IMR-90 (cell line): ENCODE measurements at regions of chr16 and their contacts with region 1.

Region 1: DNA sequence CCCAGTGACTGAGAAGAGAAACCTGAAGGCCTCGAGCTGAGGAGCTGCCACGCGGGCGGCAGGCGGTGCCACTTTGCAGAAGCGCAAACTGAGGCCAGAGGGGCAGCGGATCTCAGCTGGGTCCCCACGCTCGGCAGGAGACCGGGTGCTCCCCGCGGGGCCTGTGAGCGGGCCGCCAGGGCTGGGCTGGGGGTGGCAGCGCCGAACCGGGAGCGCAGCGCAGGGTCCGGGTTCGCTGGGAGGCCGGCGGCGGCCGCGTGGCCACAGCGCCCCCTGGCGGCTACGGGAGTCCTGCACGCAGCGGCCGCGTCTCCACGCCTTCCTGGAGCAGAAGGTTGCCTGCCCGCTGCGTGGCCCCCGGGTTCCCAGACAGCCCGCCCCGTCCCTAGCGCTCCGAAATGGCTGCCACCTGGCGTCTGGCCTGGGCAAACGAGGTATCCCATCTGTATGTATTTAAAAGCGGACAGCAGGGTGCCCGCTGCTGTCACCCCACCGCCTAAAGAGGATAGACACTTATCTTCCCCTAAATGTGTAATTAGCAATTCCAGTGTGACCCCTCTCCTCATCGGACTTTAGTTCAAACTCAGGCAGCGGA is 96.1 kb upstream of the CDH5 start:
- DNase-seq: peak; percentile 54
- ATAC-seq: peak; percentile 72
- H3K4me3 ChIP-seq: 0 out of 2 replicates have a peak overlapping the region, but pooled peaks have one; percentile 20
- H3K27ac ChIP-seq: peak overlapping the region; percentile 86
- H3K4me1 ChIP-seq: peaks cover 25% of the 10 kb centered on the region
- H3K27me3 ChIP-seq: no peaks in the 10 kb centered on the region
- CTCF ChIP-seq: peak; percentile 97
- POLR2A ChIP-seq: 0 out of 2 replicates have a peak, but pooled peaks have one; percentile 37
- RAD21 ChIP-seq: peak; percentile 97

Region 2: GRCh38 chr16:65336160-65336559 is 934.3 kb before region 1 on chr16:
- CTCF ChIA-PET with region 1: interaction called, 3 read pairs
- POLR2A ChIA-PET with region 1: no interaction called
- dilution Hi-C with region 1: no loop called
- in situ Hi-C with region 1: no loop called
- intact Hi-C with region 1: loop called (anchors 10 kb)
- DNase-seq: peak; percentile 77
- ATAC-seq: peak; percentile 90
- H3K4me3 ChIP-seq: no peak overlapping the region
- H3K27ac ChIP-seq: no peak overlapping the region; the same call in 1 of the 2 replicates
- H3K4me1 ChIP-seq: peaks cover 8% of the 10 kb centered on the region
- H3K27me3 ChIP-seq: no peaks in the 10 kb centered on the region
- CTCF ChIP-seq: no peak
- POLR2A ChIP-seq: no peak
- RAD21 ChIP-seq: no peak

Region 3: GRCh38 chr16:65658349-65658748 is 612.1 kb before region 1 on chr16:
- CTCF ChIA-PET with region 1: no interaction called
- POLR2A ChIA-PET with region 1: no interaction called
- dilution Hi-C with region 1: no loop called
- in situ Hi-C with region 1: no loop called
- intact Hi-C with region 1: loop called (anchors 5 kb)
- DNase-seq: peak; percentile 86
- ATAC-seq: peak; percentile 86
- H3K4me3 ChIP-seq: no peak overlapping the region
- H3K27ac ChIP-seq: peak overlapping the region; percentile 58
- H3K4me1 ChIP-seq: peaks cover 5% of the 10 kb centered on the region
- H3K27me3 ChIP-seq: peaks cover 4% of the 10 kb centered on the region; the same call in 1 of the 2 replicates
- CTCF ChIP-seq: no peak
- POLR2A ChIP-seq: no peak
- RAD21 ChIP-seq: 0 out of 2 replicates have a peak, but pooled peaks have one; percentile 12

Region 4: DNA sequence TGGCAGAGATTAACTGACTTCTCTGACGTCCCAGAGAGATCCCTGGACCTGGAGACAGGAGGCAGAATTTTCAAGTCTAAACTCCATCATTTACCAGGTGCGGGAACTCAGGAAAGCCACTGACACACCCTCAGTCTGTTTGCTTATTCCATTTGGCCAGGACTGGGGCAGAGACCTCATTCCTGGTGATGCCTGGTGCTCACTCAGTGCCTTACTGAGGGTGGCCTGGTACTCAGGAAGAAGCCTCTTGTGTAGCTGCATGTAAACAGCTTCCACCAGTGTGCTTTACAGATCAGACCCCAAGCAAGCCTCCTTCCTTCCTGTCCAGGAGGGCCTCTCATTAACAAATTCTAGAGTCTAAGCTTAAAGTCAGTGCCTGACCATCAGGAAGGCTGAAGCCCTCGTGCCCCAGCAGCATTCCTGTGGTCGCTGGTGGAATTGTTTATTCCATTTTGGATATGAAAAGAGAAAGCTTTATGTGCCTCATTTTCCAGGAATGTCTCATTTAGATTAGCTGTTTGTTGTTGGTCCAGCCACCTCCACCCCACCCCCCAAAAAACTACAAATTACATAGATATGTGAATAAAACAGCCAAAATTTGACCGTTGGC is 140.0 kb before region 1 on chr16:
- CTCF ChIA-PET with region 1: no interaction called
- POLR2A ChIA-PET with region 1: no interaction called
- dilution Hi-C with region 1: no loop called
- in situ Hi-C with region 1: no loop called
- intact Hi-C with region 1: loop called (anchors 2 kb)
- DNase-seq: peak; percentile 92
- ATAC-seq: peak; percentile 87
- H3K4me3 ChIP-seq: no peak overlapping the region
- H3K27ac ChIP-seq: peak overlapping the region; percentile 99
- H3K4me1 ChIP-seq: peaks cover 57% of the 10 kb centered on the region
- H3K27me3 ChIP-seq: no peaks in the 10 kb centered on the region
- CTCF ChIP-seq: no peak
- POLR2A ChIP-seq: no peak
- RAD21 ChIP-seq: no peak; the same call in 1 of the 2 replicates

Region 5: DNA sequence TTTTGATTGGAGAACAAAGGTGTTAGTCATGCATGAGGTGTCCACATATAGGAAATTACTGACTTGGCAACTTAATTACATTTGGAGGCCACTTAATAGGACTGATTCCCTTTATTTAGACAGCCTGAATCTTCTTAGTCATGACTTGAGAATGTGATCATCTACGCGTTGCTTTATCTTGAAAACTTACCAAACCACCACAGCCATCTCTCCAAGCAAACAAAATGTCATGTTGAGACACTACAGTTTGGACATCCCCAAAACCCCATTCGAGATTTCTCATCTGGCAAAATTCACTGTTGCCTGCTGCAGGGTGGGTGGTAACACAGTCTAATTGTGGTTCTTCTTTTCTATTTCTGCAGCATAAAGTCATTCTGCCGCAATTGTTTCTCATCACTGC is 80.5 kb before region 1 on chr16:
- CTCF ChIA-PET with region 1: no interaction called
- POLR2A ChIA-PET with region 1: no interaction called
- dilution Hi-C with region 1: no loop called
- in situ Hi-C with region 1: no loop called
- intact Hi-C with region 1: loop called (anchors 5 kb)
- DNase-seq: peak; percentile 92
- ATAC-seq: peak; percentile 73
- H3K4me3 ChIP-seq: no peak overlapping the region
- H3K27ac ChIP-seq: no peak overlapping the region
- H3K4me1 ChIP-seq: peaks cover 17% of the 10 kb centered on the region
- H3K27me3 ChIP-seq: peaks cover 3% of the 10 kb centered on the region; the same call in 1 of the 2 replicates
- CTCF ChIP-seq: no peak
- POLR2A ChIP-seq: no peak
- RAD21 ChIP-seq: no peak

Region 6: DNA sequence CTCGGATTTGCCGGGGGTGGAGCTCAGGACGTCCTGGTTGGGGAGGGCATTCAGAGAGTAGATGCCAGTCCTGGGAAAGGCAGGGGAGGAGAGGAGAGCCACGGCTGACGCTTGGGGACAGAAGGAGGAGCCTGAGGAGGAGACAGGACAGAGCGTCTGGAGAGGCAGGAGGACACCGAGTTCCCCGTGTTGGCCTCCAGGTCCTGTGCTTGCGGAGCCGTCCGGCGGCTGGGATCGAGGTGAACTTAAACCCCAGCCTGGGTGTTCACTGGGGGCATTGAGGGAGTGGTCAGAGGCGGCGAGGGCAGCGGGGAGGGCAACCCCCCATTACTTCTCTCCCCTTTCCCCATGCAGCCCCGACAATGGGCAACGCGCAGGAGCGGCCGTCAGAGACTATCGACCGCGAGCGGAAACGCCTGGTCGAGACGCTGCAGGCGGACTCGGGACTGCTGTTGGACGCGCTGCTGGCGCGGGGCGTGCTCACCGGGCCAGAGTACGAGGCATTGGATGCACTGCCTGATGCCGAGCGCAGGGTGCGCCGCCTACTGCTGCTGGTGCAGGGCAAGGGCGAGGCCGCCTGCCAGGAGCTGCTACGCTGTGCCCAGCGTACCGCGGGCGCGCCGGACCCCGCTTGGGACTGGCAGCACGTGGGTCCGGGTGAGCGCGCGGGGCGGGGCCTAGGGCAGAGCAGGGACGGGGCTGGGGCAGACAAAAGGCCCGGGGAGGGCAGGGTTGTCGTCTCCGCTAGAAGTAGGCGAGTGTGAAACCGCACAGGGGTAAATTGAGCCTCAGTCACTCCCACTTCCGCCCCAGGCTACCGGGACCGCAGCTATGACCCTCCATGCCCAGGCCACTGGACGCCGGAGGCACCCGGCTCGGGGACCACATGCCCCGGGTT is 903.6 kb after region 1 on chr16:
- CTCF ChIA-PET with region 1: no interaction called
- POLR2A ChIA-PET with region 1: no interaction called
- dilution Hi-C with region 1: no loop called
- in situ Hi-C with region 1: no loop called
- intact Hi-C with region 1: no loop called
- DNase-seq: peak; percentile 76
- ATAC-seq: peak; percentile 73
- H3K4me3 ChIP-seq: peak overlapping the region; percentile 36
- H3K27ac ChIP-seq: peak overlapping the region; percentile 36; the same call in 1 of the 2 replicates
- H3K4me1 ChIP-seq: peaks cover 35% of the 10 kb centered on the region
- H3K27me3 ChIP-seq: no peaks in the 10 kb centered on the region
- CTCF ChIP-seq: peak; percentile 38
- POLR2A ChIP-seq: no peak
- RAD21 ChIP-seq: no peak